ENCODE measurements at regions of chr9 and their contacts with region 1.

Region 1: DNA sequence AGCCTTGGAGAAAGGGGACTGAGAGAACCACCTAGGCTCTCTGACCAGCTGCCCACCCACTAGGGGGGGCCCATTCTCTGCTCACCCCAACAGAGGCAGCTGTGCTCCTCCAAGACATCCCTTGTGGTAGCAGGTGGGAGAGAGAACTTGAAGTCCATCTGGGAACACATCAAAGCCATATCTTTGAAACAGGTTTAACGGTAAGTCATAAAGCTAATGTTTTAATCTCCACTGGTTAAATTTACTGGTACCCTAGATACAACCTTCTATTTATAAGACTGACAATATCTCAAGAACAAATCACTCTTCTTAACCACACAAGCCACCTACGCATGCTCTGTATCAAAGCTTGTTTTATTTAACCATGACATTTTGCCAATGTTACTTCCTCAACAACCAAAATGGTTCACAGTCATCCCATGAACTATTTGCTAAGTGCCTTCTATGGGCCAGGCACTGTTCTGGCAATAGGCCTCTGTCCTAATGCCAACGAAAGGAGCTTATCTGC is 20.4 kb downstream of the AUH start:
- DNase-seq: no peak
- ATAC-seq: peak in 3 of 4 donors; percentile 64 to 88 (median 79)
- H3K4me3 ChIP-seq: no peak overlapping the region
- H3K27ac ChIP-seq: peak overlapping the region in 5 of 12 donors; percentile 24 to 51 (median 42)
- H3K4me1 ChIP-seq: peaks cover 0 to 22% (median 1%) of the 10 kb centered on the region in 12 donors
- H3K27me3 ChIP-seq: no peaks in the 10 kb centered on the region
- CTCF ChIP-seq: no peak
- POLR2A ChIP-seq: no peak

Region 2: DNA sequence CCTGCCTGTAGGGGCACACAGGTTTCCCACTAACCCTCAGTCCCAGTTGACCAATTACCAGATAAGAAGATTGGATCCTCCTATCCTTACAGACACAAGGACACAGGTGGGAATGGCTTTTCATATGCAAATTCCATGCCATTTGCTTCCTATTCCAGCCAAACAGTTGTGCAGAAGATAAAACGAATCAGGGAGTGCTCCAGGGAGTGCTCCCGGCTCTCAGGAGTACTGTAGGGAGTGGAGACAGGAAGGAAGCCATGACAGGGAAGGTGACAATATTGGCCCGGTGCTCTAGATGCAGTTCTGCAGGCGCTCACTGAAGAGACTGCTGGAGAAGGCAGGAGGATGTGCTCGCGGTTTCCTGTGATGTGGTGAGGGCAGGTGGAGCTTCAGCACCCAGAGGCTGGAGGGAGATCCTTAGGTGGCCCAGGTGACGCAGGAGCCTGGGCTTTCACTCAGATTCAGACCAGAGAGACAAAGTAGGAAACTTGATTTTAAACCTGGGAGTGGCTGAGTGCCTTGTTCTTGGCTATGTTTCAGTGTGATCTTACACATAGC is 239.6 kb before region 1 on chr9:
- intact Hi-C with region 1: loop called in 1 of 10 experiments (anchors 10 kb)
- DNase-seq: no peak
- ATAC-seq: no peak
- H3K4me3 ChIP-seq: no peak overlapping the region
- H3K27ac ChIP-seq: peak overlapping the region in 10 of 12 donors; percentile 62 to 93 (median 80)
- H3K4me1 ChIP-seq: peaks cover 3 to 41% (median 30%) of the 10 kb centered on the region in 12 donors
- H3K27me3 ChIP-seq: no peaks in the 10 kb centered on the region
- CTCF ChIP-seq: no peak
- POLR2A ChIP-seq: no peak

Region 3: DNA sequence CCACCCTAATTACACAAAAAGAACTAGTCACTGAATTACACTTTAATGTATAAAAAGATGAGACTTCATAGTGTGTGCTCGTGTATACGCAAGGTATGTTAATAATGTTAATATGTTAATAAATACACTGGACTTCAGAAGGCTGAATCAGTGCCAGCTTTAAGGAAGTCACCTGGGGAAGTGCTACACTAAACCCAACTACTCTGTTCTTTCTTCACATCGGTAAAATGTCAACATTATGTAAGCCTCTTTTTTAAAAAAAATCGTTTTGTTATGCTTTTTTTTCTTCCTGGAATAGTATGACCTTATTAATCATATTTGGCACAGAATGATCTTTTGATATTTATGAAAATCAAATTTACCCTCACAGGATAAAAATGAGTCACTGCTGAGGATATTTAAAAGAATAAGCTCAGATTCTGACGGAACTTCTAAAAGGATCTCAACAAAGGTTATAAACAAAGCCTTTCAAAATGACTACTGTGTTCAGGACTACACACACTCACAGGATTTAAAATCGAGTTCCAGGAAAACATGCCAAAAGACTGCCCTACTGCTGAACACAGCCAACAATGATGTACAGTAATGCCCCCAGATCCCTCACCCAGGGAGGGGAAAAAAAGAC is 55.5 kb before region 1 on chr9:
- intact Hi-C with region 1: loop called in 1 of 10 experiments (anchors 5 kb)
- DNase-seq: no peak
- ATAC-seq: peak in 2 of 4 donors; percentile 18 to 29
- H3K4me3 ChIP-seq: no peak overlapping the region
- H3K27ac ChIP-seq: peak overlapping the region in 1 of 12 donors; percentile 20
- H3K4me1 ChIP-seq: peaks cover 0 to 11% (median 6%) of the 10 kb centered on the region in 12 donors
- H3K27me3 ChIP-seq: no peaks in the 10 kb centered on the region
- CTCF ChIP-seq: no peak
- POLR2A ChIP-seq: no peak

Region 4: DNA sequence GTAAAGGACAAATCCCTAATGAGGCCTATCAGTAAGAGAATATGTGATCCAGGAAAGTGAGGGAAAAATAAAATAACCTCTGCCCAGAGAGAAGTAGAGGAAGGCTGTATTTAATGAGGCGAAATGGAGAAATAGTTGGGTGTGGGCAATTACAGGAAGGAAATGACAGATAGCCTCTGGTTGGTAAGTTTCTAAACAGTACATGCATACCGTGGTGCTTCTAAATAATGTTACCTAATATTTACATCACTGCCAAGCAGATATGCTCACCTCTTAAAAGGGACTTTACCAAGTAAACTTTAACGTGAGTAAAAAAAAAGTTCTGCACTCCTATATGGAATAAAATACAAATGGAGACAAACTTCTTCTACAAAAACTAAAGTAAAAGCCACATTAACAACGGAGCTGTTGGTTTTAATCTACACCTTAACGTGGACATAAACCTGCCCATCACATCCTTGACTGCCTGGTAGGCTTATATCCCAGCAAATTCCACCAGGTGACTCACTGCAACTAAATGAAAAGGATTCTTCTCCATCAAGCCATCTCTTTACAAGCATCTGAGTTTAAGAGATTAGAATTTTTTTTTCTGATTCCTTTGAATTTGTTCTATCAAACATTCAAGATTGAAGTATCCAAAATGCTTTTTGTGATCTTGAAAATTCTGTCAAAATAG is 69.9 kb after region 1 on chr9:
- intact Hi-C with region 1: no loop called
- DNase-seq: no peak
- ATAC-seq: peak in 2 of 4 donors; percentile 24 to 53
- H3K4me3 ChIP-seq: no peak overlapping the region
- H3K27ac ChIP-seq: peak overlapping the region in 1 of 12 donors; percentile 30
- H3K4me1 ChIP-seq: peaks cover 0 to 62% (median 9%) of the 10 kb centered on the region in 12 donors
- H3K27me3 ChIP-seq: no peaks in the 10 kb centered on the region
- CTCF ChIP-seq: no peak
- POLR2A ChIP-seq: no peak

Region 5: DNA sequence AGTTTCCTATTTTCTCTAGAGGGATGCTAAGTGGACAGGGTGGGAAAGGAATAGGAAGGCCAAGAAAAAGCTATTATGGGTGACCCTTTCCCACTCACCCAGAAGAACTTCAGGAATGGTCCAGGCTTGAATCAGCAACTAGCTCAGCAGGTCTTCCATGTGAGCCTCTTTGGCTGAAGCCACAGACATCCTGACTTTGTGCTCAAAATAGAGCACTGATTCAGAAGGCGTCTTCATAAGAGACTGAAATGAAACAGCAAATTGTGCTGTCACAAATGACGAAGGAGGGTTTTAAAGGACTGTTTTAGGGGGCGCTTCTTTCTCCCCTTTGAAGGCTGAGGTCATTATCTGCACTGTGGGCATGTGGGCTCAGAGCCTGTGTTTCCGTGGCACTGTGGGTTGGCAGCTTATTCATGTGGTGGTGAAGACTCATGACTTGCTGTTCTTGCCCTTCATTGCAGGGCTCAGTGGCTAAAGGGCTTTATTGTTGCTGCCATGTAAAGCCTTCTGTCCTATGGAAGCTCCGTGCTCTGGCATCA is 148.1 kb after region 1 on chr9:
- intact Hi-C with region 1: no loop called
- DNase-seq: peak in 1 of 5 donors; percentile 45
- ATAC-seq: peak; percentile 29 to 84 (median 72)
- H3K4me3 ChIP-seq: no peak overlapping the region
- H3K27ac ChIP-seq: peak overlapping the region in 11 of 12 donors; percentile 44 to 87 (median 65)
- H3K4me1 ChIP-seq: peaks cover 0 to 29% (median 7%) of the 10 kb centered on the region in 12 donors
- H3K27me3 ChIP-seq: no peaks in the 10 kb centered on the region
- CTCF ChIP-seq: no peak
- POLR2A ChIP-seq: no peak

Region 6: DNA sequence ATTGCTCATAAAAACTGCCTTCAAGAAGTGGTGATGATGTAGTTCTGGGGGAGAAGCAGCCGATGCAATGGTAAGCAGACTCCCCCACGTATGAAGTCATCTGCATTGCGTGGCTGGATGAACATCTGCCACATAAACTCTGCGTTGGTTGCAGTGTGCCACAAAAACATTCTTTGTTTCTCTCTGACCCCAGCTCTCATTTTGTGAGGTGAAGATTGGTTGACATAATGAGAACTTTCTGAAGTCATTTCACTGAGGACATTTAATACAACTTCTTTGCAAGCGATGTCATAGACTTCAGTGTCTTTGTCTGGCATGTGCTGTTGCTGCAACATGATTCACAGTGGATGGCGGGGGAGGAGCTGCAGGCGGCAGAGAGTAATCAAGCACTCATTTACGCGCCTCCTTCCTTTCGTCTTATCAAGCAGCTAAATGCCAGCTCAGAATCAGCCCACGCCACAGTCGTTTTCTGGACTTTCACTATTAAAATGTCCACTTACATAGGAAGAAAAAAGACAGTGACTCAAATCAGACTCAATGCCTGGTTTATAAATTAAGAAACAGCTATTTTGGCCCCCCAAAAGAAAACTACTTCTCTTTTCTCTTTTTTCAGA is 173.9 kb after region 1 on chr9:
- intact Hi-C with region 1: no loop called
- DNase-seq: peak in 3 of 5 donors; percentile 43 to 76 (median 44)
- ATAC-seq: peak in 3 of 4 donors; percentile 69 to 95 (median 71)
- H3K4me3 ChIP-seq: peak overlapping the region in 7 of 12 donors; percentile 14 to 40 (median 26)
- H3K27ac ChIP-seq: peak overlapping the region in 1 of 12 donors; percentile 8
- H3K4me1 ChIP-seq: peaks cover 0 to 5% (median 0%) of the 10 kb centered on the region in 12 donors
- H3K27me3 ChIP-seq: no peaks in the 10 kb centered on the region
- CTCF ChIP-seq: no peak
- POLR2A ChIP-seq: no peak

Region 7: DNA sequence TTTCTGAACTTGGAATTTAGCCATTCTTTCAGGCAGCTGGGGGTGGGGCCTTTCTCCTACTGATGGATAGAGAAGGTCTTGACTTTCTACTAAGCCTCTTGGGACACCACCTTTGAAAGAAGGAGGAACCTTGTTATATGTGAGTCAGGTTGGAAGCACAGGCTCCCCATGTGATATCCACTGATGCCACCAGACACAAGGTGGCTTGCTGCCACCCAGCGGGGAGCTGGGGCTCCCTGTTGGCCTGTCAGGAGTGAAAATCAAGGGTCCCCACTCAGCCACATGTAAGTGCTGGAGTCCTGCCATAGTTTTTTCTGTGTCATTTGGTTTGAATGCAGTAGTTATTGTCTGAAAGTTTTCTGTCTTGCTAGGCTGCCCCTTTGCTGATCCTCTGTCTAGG is 334.8 kb after region 1 on chr9:
- intact Hi-C with region 1: loop called in 1 of 10 experiments (anchors 10 kb)
- DNase-seq: no peak
- ATAC-seq: peak in 1 of 4 donors; percentile 50
- H3K4me3 ChIP-seq: no peak overlapping the region
- H3K27ac ChIP-seq: no peak overlapping the region
- H3K4me1 ChIP-seq: no peaks in the 10 kb centered on the region
- H3K27me3 ChIP-seq: peaks cover 0 to 3% (median 0%) of the 10 kb centered on the region in 9 donors
- CTCF ChIP-seq: peak in 7 of 12 donors; percentile 7 to 37 (median 30)
- POLR2A ChIP-seq: no peak

Measured in heart left ventricle (tissue), 16 donors.